Common myeloid progenitor, CD34-positive (primary cell): ENCODE measurements at regions of chr1 and their contacts with region 1.

Region 1: DNA sequence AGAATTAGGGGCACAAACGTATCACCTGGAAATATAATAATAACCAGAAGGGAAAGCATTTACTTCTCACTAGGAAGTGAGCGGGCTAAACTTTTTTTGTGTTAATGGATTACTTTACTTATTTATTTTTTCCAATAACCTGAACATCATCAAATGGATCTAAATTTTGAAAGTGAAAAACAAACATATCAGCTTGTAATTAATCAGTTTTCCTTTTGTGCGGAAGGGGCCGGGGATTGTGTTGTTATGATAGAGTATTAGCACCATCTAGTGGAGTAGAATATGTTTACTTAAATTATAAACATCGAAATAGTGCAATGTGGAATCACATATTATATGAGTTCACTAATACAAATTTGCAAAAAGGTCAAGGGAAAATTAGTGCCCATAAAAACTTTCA is 9.0 kb downstream of the CFH start:
- DNase-seq: peak; percentile 49 to 64 (median 61)
- H3K4me3 ChIP-seq: peak overlapping the region in 5 of 7 experiments; percentile 30 to 80 (median 47)
- H3K27ac ChIP-seq: peak overlapping the region in 1 of 2 experiments; percentile 10
- H3K4me1 ChIP-seq: peaks cover 0 to 10% (median 3%) of the 10 kb centered on the region in 4 experiments
- H3K27me3 ChIP-seq: no peaks in the 10 kb centered on the region

Region 2: DNA sequence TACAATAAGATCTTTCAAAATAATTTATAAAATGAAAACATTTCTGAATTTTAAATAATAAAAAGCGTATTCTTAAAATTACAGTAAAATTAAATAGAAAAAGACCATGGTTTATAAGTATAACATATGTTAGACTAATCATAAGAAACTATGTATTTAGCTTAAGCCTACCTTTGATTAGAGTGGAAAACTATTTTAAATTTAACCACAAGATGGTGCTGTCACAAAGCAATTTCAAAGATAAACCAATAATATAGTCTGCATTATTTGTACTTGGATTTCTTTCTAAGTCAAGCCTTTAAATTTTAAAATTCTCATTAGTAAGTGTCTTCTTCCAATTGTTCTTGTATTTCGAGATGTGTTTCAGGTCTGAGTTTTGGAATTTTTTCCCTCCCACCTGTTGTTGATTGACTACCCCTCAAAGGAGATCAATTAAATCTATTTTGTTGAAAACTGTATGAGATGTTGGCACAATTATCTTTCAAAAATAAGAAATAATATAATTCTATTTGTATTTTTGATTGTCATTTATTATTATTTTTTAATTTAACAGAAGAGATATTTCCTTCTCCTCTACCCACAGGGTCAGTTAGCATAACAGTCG is 512.4 kb before region 1 on chr1:
- CTCF ChIA-PET with region 1: interaction called, 23 read pairs
- POLR2A ChIA-PET with region 1: no interaction called
- DNase-seq: peak; percentile 33 to 69 (median 56)
- H3K4me3 ChIP-seq: no peak overlapping the region
- H3K27ac ChIP-seq: no peak overlapping the region
- H3K4me1 ChIP-seq: no peaks in the 10 kb centered on the region
- H3K27me3 ChIP-seq: no peaks in the 10 kb centered on the region

Region 3: DNA sequence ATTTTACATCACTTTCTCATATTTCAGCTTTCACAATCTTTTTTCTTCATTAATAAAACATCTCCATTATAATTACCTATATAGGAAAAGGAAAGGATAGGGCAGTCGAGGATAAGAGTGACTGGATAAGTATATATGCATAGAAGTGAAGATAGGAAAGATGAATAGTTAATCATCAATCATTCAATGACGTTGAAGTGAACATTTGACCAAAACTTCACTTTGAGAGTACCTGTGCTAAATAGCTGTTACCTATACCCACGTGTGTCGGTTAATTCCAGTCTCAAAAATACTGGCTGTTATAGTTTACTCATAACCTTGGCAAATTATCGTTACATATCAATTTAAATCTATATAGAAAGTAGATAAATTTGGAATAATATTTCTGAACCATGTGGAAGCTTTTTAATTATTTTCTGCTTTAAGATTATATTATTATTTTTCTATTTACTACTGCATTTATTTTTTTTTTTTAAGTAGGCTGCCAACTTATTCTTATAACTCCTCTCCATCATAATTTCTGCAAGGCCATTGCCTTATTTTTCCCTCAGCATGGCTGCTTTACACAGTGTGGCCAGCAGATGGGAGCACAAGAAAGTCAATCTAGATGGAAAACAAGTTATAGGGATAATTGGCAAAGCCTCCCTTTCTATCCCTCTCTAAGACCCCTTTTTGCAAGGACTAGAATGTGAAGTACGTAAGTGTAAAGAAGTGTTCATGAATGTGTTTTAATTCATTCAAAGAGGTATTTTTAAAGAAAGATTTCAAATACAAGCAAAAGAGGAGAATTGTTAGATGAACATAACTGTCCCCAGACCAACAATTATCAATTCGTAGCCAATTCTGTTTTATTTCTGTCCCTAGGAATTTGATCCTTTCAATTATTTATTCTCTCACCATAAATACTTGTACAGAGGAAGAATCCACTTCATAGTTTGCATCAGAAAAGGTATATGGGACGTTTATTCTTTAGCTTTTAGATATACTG is 343.0 kb before region 1 on chr1:
- CTCF ChIA-PET with region 1: interaction called, 22 read pairs
- POLR2A ChIA-PET with region 1: no interaction called
- DNase-seq: peak; percentile 29 to 56 (median 48)
- H3K4me3 ChIP-seq: no peak overlapping the region
- H3K27ac ChIP-seq: no peak overlapping the region
- H3K4me1 ChIP-seq: no peaks in the 10 kb centered on the region
- H3K27me3 ChIP-seq: no peaks in the 10 kb centered on the region

Region 4: DNA sequence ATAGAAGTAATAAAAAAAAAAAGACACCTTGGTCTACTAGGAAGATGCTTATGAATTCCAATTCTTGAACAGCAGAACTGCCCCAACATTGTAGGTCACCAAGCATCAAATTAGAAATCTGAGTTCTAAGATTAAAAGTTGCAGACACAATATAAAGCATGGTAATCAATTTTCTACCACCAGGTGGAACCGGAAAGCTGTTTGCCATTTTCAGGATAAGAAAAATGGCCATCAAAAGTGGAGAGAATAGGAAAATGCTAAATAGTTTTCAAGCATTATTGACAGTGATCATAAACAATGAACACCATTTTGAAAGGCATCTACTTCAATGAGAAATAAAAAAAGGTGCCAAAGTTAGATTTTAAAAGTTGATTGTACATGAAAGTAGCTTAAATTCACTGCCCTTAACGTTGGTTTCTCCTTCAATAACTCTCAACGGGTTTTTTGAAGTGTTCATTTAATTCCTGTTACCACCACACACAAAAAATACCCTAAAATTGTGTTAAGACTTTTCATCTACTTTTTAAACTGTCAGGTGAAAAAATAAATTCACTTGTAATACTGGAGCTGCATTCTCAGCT is 305.6 kb before region 1 on chr1:
- CTCF ChIA-PET with region 1: interaction called, 33 read pairs
- POLR2A ChIA-PET with region 1: no interaction called
- DNase-seq: peak; percentile 34 to 52 (median 36)
- H3K4me3 ChIP-seq: no peak overlapping the region
- H3K27ac ChIP-seq: no peak overlapping the region
- H3K4me1 ChIP-seq: no peaks in the 10 kb centered on the region
- H3K27me3 ChIP-seq: no peaks in the 10 kb centered on the region